Dorsolateral prefrontal cortex (tissue), 120 donors: ENCODE measurements at regions of chr5 and their contacts with region 1.

Region 1: GRCh38 chr5:88502179-88503040 is 233.8 kb upstream of the TMEM161B start:
- DNase-seq: no peak
- H3K4me3 ChIP-seq: peak overlapping the region; percentile 36 to 76 (median 59)
- H3K27ac ChIP-seq: peak overlapping the region in 55 of 59 donors; percentile 10 to 89 (median 69)
- H3K27me3 ChIP-seq: no peaks in the 10 kb centered on the region
- CTCF ChIP-seq: no peak

Region 2: DNA sequence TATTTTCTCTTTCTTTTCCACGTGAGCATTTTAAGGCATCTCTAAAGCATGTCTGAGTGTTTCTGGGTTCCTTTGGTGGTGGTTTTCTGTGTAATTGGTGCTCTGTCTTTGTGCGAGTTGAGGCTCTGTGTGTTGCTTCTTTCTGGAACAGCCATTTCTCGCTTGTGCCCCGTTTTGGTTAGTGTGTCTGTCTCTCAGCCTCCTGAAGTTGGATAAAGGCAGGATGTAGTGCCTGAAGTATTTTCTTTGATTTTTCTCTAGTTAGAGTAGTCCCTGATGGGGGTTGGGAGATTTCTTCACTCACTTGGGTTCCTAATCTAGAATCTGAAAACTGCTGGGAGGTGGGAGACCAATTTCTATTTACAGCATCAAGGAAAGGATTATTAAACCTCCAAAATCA is 104.1 kb before region 1 on chr5:
- intact Hi-C with region 1: loop called in 1 of 2 experiments (anchors 5 kb)
- DNase-seq: no peak
- H3K4me3 ChIP-seq: peak overlapping the region; percentile 5 to 70 (median 48)
- H3K27ac ChIP-seq: peak overlapping the region; percentile 31 to 99 (median 95)
- H3K27me3 ChIP-seq: no peaks in the 10 kb centered on the region
- CTCF ChIP-seq: no peak

Region 3: DNA sequence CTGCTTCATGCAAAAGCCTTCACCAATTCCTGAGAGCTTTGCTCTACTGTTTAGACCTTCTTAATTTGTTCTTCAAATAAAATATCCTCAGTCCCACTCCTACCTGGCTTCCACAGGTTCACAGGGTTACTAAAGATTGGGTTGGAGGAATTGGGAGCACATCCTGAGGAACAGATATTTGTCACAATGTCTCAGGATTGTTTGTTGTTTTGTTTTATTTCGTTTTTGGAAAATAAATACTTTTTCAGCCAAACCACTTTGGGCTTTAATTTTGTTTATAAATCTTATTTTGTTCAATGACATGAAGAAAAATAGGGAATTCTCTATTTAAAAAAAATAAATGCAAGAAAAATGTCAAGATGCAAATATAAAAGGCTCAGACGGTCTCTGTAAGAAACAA is 131.6 kb after region 1 on chr5:
- intact Hi-C with region 1: no loop called
- DNase-seq: no peak
- H3K4me3 ChIP-seq: no peak overlapping the region
- H3K27ac ChIP-seq: no peak overlapping the region
- H3K27me3 ChIP-seq: no peaks in the 10 kb centered on the region
- CTCF ChIP-seq: no peak